PC-9 (cell line): ENCODE measurements at regions of chr7 and their contacts with region 1.

Region 1: DNA sequence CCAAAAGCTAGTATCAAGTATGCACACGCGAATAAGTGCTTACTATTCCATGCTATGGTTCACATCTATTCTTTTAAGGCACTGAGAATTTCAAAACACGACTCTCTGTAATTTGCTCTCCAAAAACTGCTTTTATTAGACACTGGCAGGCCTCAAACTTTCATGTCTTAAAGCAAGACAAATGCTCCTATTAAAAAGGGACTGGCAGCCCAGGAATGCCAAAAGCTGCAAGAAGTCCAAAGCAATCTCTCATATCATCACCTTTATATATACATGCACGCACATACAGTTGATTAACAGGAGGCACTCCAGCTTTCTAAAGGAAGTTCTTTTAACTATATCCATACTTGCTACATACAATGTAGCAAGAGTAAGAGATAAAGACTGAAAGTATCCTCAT is 34.8 kb downstream of the UBE2H start:
- DNase-seq: no peak
- H3K4me3 ChIP-seq: no peak overlapping the region
- H3K27ac ChIP-seq: no peak overlapping the region
- H3K4me1 ChIP-seq: no peaks in the 10 kb centered on the region; the same call in 1 of the 2 replicates
- H3K27me3 ChIP-seq: no peaks in the 10 kb centered on the region
- CTCF ChIP-seq: no peak

Region 2: GRCh38 chr7:129875745-129876411 is 42.1 kb before region 1 on chr7:
- CTCF ChIA-PET with region 1: interaction called, 14 read pairs
- POLR2A ChIA-PET with region 1: interaction called, 3 read pairs
- intact Hi-C with region 1: no loop called
- DNase-seq: peak in 1 of 2 experiments; percentile 19
- H3K4me3 ChIP-seq: no peak overlapping the region
- H3K27ac ChIP-seq: peak overlapping the region; percentile 59
- H3K4me1 ChIP-seq: peaks cover 38% of the 10 kb centered on the region
- H3K27me3 ChIP-seq: no peaks in the 10 kb centered on the region
- CTCF ChIP-seq: no peak

Region 3: GRCh38 chr7:130021105-130021834 is 103.3 kb after region 1 on chr7:
- CTCF ChIA-PET with region 1: no interaction called
- POLR2A ChIA-PET with region 1: no interaction called
- intact Hi-C with region 1: no loop called
- DNase-seq: no peak
- H3K4me3 ChIP-seq: no peak overlapping the region
- H3K27ac ChIP-seq: no peak overlapping the region
- H3K4me1 ChIP-seq: peaks cover 13% of the 10 kb centered on the region
- H3K27me3 ChIP-seq: no peaks in the 10 kb centered on the region
- CTCF ChIP-seq: no peak